Breast epithelium (tissue), 4 donors: ENCODE measurements at regions of chr19 and their contacts with region 1.

Region 1: DNA sequence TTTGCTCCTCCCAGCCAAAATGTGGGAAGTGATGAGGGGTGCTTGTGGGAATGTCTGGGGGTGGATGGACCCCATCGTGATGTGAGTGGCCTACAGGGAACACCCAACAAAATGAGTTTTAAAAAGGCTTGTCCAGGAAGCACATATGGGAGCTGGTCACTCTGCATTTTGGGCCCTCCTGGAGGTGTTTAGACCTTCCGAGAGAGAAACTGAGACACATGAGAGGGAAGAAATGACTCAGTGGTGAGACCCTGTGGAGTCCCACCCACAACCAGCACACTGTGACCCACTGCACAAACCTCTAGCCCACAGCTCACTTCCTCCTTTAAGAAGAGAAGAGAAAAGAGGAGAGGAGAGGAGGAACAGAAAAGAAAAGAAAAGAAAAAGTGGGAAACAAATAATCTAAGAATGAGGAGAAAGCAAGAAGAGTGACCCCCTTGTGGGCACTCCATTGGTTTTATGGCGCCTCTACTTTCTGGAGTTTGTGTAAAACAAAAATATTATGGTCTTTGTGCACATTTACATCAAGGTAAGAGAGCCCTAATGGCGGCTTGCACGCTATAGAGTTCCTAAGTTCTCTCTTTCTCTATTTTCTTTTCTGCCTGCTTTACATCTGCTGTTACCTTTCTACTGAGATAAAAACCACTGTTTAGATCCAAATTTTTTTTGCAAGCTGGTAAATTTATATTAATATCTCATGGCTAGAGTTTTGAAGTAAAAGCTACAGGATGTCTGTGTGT is 13.3 kb upstream of the LILRB1 start:
- DNase-seq: no peak
- H3K4me3 ChIP-seq: no peak overlapping the region
- H3K27ac ChIP-seq: no peak overlapping the region
- H3K4me1 ChIP-seq: no peaks in the 10 kb centered on the region
- H3K27me3 ChIP-seq: no peaks in the 10 kb centered on the region
- CTCF ChIP-seq: no peak
- POLR2A ChIP-seq: no peak

Region 2: GRCh38 chr19:54959840-54960239 is 342.8 kb after region 1 on chr19:
- intact Hi-C with region 1: loop called (anchors 5 kb)
- DNase-seq: no peak
- H3K4me3 ChIP-seq: no peak overlapping the region
- H3K27ac ChIP-seq: no peak overlapping the region
- H3K4me1 ChIP-seq: no peaks in the 10 kb centered on the region
- H3K27me3 ChIP-seq: no peaks in the 10 kb centered on the region
- CTCF ChIP-seq: no peak
- POLR2A ChIP-seq: no peak